Endothelial cell of umbilical vein (primary cell): ENCODE measurements at regions of chr3 and their contacts with region 1.

Region 1: DNA sequence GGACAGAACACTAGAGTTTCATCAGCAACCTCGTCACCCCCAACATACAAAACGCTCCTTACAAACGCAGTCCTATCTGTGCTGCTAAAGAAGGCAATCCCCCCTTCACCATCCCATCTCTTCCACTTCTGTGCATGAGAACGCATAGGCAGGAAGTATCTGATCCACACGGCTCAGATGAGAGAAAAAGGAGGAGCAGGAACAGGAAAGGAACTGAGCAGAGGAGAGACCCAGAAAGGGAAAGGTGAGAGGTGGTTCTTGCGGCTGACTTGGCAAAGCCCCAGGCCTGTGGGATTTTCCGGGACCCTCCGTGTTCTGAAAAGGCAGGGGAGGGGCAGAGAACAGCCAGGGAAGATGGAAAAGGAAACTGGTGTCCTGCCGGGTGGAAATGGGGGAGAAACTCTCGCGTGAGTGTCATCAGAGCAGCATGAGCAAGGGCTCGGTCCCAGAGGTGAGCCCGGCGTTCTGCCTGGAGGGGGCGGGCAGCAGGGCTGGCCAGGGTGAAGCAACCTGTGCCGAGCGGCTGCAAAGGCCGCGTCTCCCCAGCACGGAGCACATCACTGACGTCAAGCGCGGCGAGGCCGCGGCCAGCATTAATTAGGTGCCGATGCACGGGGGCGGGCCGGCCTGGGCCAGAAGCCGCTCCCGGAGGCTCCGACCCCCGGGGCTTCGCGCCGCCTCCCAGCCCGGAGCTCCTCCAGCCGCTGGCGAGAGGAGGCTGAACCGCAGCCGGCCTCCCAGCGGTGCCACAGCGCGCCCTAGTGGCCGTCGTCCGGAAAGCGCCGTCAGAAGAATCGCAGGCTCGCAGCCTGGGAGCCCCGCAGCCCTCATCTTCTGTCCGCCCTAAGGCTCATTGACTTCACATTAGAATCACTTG is 35.8 kb downstream of the CPN2 start:
- DNase-seq: peak; percentile 84
- H3K4me3 ChIP-seq: peak overlapping the region; percentile 18 to 44 (median 37)
- H3K27ac ChIP-seq: peak overlapping the region; percentile 45
- H3K4me1 ChIP-seq: peaks cover 7% of the 10 kb centered on the region
- H3K27me3 ChIP-seq: peaks cover 4 to 5% of the 10 kb centered on the region in 2 experiments
- CTCF ChIP-seq: peak; percentile 86 to 92
- POLR2A ChIP-seq: no peak

Region 2: DNA sequence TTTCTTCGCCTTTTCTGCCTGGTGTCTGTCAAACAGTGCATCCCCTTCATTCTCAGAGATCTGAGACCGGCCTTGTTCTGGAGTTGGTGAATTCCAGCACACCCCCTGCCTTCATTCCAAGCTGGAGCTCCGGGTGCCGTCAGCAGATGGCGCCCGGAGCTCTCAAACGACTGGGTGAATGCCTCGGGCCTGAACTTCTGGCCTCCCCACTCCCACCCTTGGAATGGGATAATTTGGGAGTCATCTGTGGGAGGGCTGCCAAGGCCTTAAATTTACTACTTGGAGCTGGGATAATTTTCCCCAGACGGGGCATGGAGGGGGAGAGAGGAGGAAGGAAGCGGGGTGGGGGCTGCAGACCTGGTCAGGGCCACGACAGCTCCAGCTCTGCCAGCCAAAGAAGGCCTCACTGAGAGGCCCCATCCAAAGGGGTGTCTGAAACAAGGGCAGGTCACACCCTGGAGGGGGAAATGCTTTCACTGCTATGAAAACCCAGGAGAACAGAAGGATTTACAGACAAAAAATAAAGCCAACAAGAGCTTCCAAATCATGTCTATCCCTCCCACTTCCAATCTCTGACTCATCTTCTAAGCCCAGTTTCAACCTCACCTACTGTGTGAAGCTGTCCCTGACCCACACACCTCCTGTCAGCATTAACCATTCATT is 534.4 kb before region 1 on chr3:
- CTCF ChIA-PET with region 1: interaction called, 355 read pairs
- POLR2A ChIA-PET with region 1: interaction called, 3 read pairs
- dilution Hi-C with region 1: no loop called
- intact Hi-C with region 1: loop called (anchors 1 kb)
- DNase-seq: peak; percentile 79
- H3K4me3 ChIP-seq: no peak overlapping the region
- H3K27ac ChIP-seq: peak overlapping the region; percentile 65
- H3K4me1 ChIP-seq: peaks cover 18% of the 10 kb centered on the region
- H3K27me3 ChIP-seq: peaks cover 17 to 19% of the 10 kb centered on the region in 2 experiments
- CTCF ChIP-seq: peak; percentile 84 to 88
- POLR2A ChIP-seq: no peak

Region 3: GRCh38 chr3:193971261-193971751 is 344.0 kb before region 1 on chr3:
- CTCF ChIA-PET with region 1: interaction called, 9 read pairs
- POLR2A ChIA-PET with region 1: no interaction called
- dilution Hi-C with region 1: no loop called
- intact Hi-C with region 1: loop called (anchors 1 kb)
- DNase-seq: no peak
- H3K4me3 ChIP-seq: no peak overlapping the region
- H3K27ac ChIP-seq: no peak overlapping the region
- H3K4me1 ChIP-seq: peaks cover 20% of the 10 kb centered on the region
- H3K27me3 ChIP-seq: no peaks in the 10 kb centered on the region
- CTCF ChIP-seq: no peak
- POLR2A ChIP-seq: no peak

Region 4: DNA sequence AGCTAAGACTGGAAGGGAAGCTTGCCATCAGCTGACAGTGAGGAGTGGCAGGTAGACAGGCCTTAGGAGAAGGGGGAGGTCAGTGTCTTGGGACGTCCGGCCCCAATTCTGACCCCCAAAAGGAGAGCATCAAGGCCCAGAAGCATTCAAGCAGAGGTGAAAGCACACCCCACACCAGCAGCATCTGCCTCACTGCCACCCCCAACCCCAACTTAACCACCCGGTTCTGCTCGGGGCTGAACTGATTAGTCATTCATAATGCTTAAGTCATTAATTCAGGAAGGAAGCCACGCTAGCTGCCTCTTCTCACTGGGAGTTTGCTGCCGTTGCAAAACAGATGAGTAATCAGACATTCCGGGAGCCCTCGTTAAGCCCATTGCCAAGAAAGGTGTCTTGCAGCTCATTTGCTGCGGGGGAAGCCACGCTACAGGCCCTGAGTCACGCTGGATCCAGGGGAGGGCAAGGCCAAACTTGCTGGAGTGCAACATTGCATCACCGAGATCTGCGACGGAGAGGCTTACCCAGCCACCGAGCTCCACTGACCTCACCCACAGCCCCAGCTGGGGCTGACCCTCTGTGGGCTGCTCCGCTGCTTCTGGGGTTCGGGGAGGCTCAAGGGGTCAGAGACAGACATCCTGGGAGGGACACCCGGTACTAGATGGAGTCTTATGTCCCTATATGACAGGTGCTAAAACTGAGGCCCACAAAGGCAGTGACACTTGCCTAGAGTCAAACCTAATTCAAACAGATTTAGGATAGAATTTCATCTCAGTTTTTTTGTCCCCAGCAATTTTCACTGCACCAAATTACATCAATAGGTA is 225.8 kb before region 1 on chr3:
- CTCF ChIA-PET with region 1: interaction called, 12 read pairs
- POLR2A ChIA-PET with region 1: no interaction called
- dilution Hi-C with region 1: no loop called
- intact Hi-C with region 1: loop called (anchors 5 kb)
- DNase-seq: peak; percentile 99
- H3K4me3 ChIP-seq: no peak overlapping the region
- H3K27ac ChIP-seq: peak overlapping the region; percentile 94
- H3K4me1 ChIP-seq: peaks cover 22% of the 10 kb centered on the region
- H3K27me3 ChIP-seq: no peaks in the 10 kb centered on the region
- CTCF ChIP-seq: no peak
- POLR2A ChIP-seq: no peak

Region 5: GRCh38 chr3:194255252-194256039 is 59.9 kb before region 1 on chr3:
- CTCF ChIA-PET with region 1: interaction called, 16 read pairs
- POLR2A ChIA-PET with region 1: no interaction called
- dilution Hi-C with region 1: no loop called
- intact Hi-C with region 1: loop called (anchors 1 kb)
- DNase-seq: peak; percentile 94
- H3K4me3 ChIP-seq: no peak overlapping the region
- H3K27ac ChIP-seq: peak overlapping the region; percentile 85
- H3K4me1 ChIP-seq: peaks cover 14% of the 10 kb centered on the region
- H3K27me3 ChIP-seq: no peaks in the 10 kb centered on the region
- CTCF ChIP-seq: peak in 1 of 2 donors; percentile 6
- POLR2A ChIP-seq: no peak

Region 6: GRCh38 chr3:194521514-194522260 is 206.4 kb after region 1 on chr3:
- CTCF ChIA-PET with region 1: no interaction called
- POLR2A ChIA-PET with region 1: no interaction called
- dilution Hi-C with region 1: no loop called
- intact Hi-C with region 1: no loop called
- DNase-seq: peak; percentile 69
- H3K4me3 ChIP-seq: no peak overlapping the region
- H3K27ac ChIP-seq: peak overlapping the region; percentile 60
- H3K4me1 ChIP-seq: peaks cover 27% of the 10 kb centered on the region
- H3K27me3 ChIP-seq: no peaks in the 10 kb centered on the region
- CTCF ChIP-seq: no peak
- POLR2A ChIP-seq: no peak